BJ (cell line): ENCODE measurements at regions of chr17 and their contacts with region 1.

Region 1: GRCh38 chr17:57849874-57850754 is at the start of gene MRPS23:
- DNase-seq: peak; percentile 90
- H3K4me3 ChIP-seq: peak within 1 kb of the TSS; percentile 75
- H3K27me3 ChIP-seq: no peaks in the 10 kb centered on the region
- CTCF ChIP-seq: no peak
- polyA plus RNA-seq, gene MRPS23: 33.7 and 34.1 TPM in 2 replicates

Region 2: GRCh38 chr17:57732062-57732461 is 118.1 kb before region 1 on chr17:
- CTCF ChIA-PET with region 1: no interaction called
- POLR2A ChIA-PET with region 1: no interaction called
- DNase-seq: no peak
- H3K4me3 ChIP-seq: no peak overlapping the region
- H3K27me3 ChIP-seq: peaks cover 4% of the 10 kb centered on the region; the same call in 1 of the 2 replicates
- CTCF ChIP-seq: no peak

Region 3: GRCh38 chr17:57833179-57833939 is 16.8 kb before region 1 on chr17:
- CTCF ChIA-PET with region 1: interaction called, 42 read pairs
- POLR2A ChIA-PET with region 1: no interaction called
- DNase-seq: no peak
- H3K4me3 ChIP-seq: peak overlapping the region; percentile 38
- H3K27me3 ChIP-seq: no peaks in the 10 kb centered on the region
- CTCF ChIP-seq: peak; percentile 89

Region 4: DNA sequence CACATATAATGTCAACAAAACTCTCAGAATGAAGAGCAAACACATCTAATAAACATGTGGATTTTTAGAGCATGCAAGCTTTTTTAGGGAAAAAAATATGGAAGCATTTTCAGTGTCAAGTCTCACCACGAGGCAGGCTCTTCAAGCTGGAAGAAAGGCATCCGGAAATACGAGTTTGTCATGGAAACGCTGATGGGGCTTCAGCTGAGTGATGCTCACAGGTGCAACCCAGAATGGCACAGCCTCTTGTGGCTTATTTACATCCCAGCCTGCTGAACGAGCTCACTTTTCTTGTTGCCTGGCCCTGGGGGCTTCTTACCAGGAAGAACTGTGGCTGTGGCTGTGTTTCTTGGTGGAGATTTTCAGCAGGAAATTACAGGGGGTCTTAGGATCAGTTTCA is 209.0 kb after region 1 on chr17:
- CTCF ChIA-PET with region 1: no interaction called
- POLR2A ChIA-PET with region 1: interaction called, 15 read pairs
- DNase-seq: no peak
- H3K4me3 ChIP-seq: no peak overlapping the region
- H3K27me3 ChIP-seq: peaks cover 6% of the 10 kb centered on the region
- CTCF ChIP-seq: no peak